ENCODE measurements at regions of chr17 and their contacts with region 1.

Region 1: DNA sequence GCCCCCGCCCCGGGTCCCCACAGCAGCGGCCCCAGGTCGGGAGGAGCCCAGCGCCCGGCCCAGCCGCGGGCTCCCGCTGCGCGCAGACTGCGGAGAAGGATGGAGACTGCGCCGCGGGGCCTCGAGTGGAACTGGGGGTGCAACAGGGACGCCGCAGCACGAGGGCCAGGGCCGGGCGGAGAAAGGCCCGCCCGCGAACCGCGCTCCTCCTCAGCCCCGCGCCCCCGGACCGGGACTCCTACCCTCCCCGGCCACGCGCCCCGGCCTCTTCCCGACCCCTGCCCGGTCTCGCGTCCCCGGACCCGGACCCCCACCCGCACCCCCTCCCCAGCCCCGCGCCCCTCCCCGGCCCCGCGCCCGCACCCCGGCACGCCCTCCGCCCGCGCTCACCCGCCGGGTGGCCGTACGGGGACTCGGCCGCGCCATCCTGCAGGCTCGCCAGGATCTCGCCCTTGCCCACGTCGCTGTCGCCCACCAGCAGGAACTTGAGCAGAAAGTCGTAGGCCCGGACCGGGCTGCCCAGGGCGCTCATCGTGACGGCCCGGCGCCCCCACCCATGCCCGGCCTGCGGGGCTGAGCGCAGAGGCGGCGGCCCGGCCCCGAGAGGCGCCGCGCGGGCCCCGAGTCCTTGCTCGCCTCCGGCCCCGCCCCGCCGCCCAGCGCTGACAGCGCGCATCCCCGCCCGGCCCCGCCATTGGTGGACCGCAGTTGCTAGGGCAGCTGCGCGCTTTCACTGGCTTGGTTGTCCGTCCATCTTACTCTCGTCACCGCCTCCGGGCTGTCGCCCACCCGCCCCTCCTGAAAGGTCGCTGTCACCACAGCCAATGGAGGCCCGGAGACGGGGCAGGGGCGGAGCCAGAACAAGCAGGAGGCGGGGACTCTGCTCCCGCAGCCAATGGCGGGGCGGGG is at the start of gene RAB40B:
- DNase-seq: peak; percentile 98 to 100 (median 99)
- ATAC-seq: peak; percentile 97
- H3K4me3 ChIP-seq: peak within 1 kb of the TSS; percentile 48
- H3K4me3 Mint-ChIP-seq: peak within 1 kb of the TSS; percentile 95
- H3K27ac ChIP-seq: no peak within 1 kb of the TSS
- H3K27ac Mint-ChIP-seq: peak within 1 kb of the TSS; percentile 21
- H3K4me1 ChIP-seq: peaks cover 18% of the 10 kb centered on the region
- H3K4me1 Mint-ChIP-seq: peaks cover 10% of the 10 kb centered on the region
- H3K27me3 ChIP-seq: peaks cover 0 to 6% of the 10 kb centered on the region in 2 experiments
- H3K27me3 Mint-ChIP-seq: no peaks in the 10 kb centered on the region
- CTCF ChIP-seq: no peak
- total RNA-seq, gene RAB40B: 1.6 to 2.0 TPM

Region 2: GRCh38 chr17:82716203-82717010 is 18.1 kb after region 1 on chr17 and contains the start of gene FN3KRP:
- CTCF ChIA-PET with region 1: no interaction called
- POLR2A ChIA-PET with region 1: no interaction called
- intact Hi-C with region 1: loop called (anchors 1 kb)
- DNase-seq: peak; percentile 69 to 99 (median 87)
- ATAC-seq: peak; percentile 87
- H3K4me3 ChIP-seq: peak within 1 kb of the TSS; percentile 72
- H3K4me3 Mint-ChIP-seq: peak within 1 kb of the TSS; percentile 97
- H3K27ac ChIP-seq: peak within 1 kb of the TSS; percentile 5 to 50
- H3K27ac Mint-ChIP-seq: peak within 1 kb of the TSS; percentile 56
- H3K4me1 ChIP-seq: peaks cover 24% of the 10 kb centered on the region
- H3K4me1 Mint-ChIP-seq: peaks cover 31% of the 10 kb centered on the region
- H3K27me3 ChIP-seq: no peaks in the 10 kb centered on the region
- H3K27me3 Mint-ChIP-seq: no peaks in the 10 kb centered on the region
- CTCF ChIP-seq: no peak
- total RNA-seq, gene FN3KRP: 30.6 to 31.2 TPM

Region 3: DNA sequence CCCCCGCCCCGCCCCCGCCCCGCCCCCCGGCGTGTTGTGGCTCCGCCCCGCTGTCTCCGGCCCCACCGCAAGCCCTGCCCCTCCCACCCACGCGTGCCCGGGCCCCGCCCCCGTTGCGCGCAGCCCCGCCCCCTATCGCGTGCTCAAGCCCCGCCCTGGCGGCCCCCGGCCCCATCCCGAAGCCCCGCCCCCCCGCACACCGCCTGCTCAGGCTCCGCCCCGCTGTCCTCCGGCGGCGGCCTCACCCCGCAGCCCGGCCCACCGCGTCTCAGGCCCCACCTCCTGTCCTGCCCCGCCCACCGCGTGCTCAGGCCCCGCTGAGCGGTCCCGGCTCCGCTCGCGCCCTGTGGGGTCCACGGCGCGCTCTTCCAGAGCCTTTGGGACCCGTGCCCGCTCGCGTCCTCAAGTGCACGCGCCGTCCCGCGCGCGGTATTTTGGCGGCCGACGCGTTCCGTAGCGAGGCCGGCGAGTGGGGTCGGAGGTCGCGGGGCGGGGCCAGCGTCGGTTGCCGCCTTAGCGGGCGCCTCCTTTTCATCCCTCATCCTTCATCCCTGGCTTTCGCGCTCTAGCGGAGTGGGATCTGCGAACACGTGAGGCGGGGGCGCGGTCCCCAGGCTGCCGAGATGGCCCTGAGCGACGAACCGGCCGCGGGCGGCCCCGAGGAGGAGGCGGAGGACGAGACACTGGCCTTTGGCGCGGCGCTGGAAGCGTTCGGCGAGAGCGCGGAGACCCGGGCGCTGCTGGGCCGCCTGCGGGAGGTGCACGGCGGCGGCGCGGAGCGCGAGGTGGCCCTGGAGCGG is 53.5 kb after region 1 on chr17 and contains the start of gene TBCD:
- CTCF ChIA-PET with region 1: no interaction called
- POLR2A ChIA-PET with region 1: no interaction called
- intact Hi-C with region 1: loop called (anchors 1 to 5 kb)
- DNase-seq: peak; percentile 77 to 96 (median 89)
- ATAC-seq: peak; percentile 71
- H3K4me3 ChIP-seq: peak within 1 kb of the TSS; percentile 63
- H3K4me3 Mint-ChIP-seq: peak within 1 kb of the TSS; percentile 89
- H3K27ac ChIP-seq: peak within 1 kb of the TSS in 1 of 2 donors; percentile 41
- H3K27ac Mint-ChIP-seq: no peak within 1 kb of the TSS
- H3K4me1 ChIP-seq: peaks cover 32% of the 10 kb centered on the region
- H3K4me1 Mint-ChIP-seq: peaks cover 25% of the 10 kb centered on the region
- H3K27me3 ChIP-seq: no peaks in the 10 kb centered on the region
- H3K27me3 Mint-ChIP-seq: no peaks in the 10 kb centered on the region
- CTCF ChIP-seq: no peak
- total RNA-seq, gene TBCD: 74.6 to 80.3 TPM

Measured in CD4-positive, alpha-beta T cell (primary cell).